ENCODE measurements at regions of chr12 and their contacts with region 1.

Region 1: DNA sequence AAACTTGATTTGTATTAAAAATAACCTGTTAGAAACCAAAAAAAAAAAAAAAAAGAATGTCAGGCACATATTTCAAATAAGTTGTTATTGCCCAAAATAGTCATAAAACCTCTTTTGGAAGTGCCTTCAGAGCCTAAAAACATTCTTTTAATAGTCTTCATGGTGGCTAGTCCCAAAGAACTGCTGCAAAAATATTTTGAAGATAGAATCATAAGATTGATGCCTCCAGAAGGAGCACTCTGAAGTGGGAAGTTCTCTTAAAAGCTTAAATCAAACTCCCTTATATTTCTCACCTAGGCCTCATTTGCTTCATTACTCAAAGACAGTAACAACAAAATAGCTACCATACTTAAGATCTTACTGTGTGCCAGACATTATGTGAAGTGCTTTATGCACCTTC is 27.2 kb upstream of the NT5DC3 start:
- DNase-seq: no peak
- H3K4me3 ChIP-seq: no peak overlapping the region
- H3K27ac ChIP-seq: peak overlapping the region; percentile 30 to 73
- H3K4me1 ChIP-seq: no peaks in the 10 kb centered on the region
- H3K27me3 ChIP-seq: no peaks in the 10 kb centered on the region
- CTCF ChIP-seq: no peak
- POLR2A ChIP-seq: no peak

Region 2: GRCh38 chr12:103626498-103626897 is 241.7 kb before region 1 on chr12:
- intact Hi-C with region 1: loop called (anchors 2 kb)
- DNase-seq: peak; percentile 43
- H3K4me3 ChIP-seq: no peak overlapping the region
- H3K27ac ChIP-seq: no peak overlapping the region
- H3K4me1 ChIP-seq: no peaks in the 10 kb centered on the region
- H3K27me3 ChIP-seq: no peaks in the 10 kb centered on the region
- CTCF ChIP-seq: peak in 2 of 4 experiments; percentile 49 to 52
- POLR2A ChIP-seq: no peak

Region 3: GRCh38 chr12:104303538-104304151 is 435.4 kb after region 1 on chr12 and contains the start of gene EID3:
- intact Hi-C with region 1: no loop called
- DNase-seq: peak; percentile 80
- H3K4me3 ChIP-seq: peak within 1 kb of the TSS; percentile 27 to 38
- H3K27ac ChIP-seq: peak within 1 kb of the TSS; percentile 43 to 54
- H3K4me1 ChIP-seq: no peaks in the 10 kb centered on the region
- H3K27me3 ChIP-seq: no peaks in the 10 kb centered on the region
- CTCF ChIP-seq: no peak
- POLR2A ChIP-seq: peak; percentile 20
- total RNA-seq, gene EID3: 8.6 to 18.1 TPM

Measured in prostate gland (tissue), 2 donors.